ENCODE measurements at regions of chr16 and their contacts with region 1.

Region 1: DNA sequence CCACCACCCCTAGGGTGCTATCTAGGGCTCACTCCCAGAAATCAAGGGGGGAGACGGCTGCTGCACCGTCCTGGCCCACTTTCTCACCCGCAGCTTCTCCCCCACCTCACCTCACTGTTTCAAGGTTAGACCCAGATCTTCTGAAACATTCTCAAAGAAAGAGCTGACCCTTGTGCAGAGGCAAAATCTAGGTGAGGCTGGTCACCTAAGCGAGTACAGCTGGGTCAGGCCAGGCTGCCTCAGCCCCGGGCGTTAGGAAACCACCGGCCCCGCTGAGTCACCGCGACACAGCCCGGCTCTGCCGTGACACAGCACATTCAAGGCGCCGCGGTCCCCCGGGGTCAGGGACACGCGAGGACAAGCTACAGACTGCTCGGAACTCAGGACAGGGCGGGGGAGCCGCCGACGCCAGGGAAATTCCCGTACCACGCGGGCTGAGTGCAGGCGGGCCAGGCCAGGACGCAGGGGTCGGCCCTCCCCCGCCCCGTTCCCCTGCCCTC is 27.1 kb downstream of the GNPTG start:
- DNase-seq: peak; percentile 69
- H3K4me3 Mint-ChIP-seq: peak overlapping the region; percentile 75
- H3K27ac Mint-ChIP-seq: peak overlapping the region; percentile 77
- H3K4me1 Mint-ChIP-seq: peaks cover 20% of the 10 kb centered on the region
- H3K27me3 Mint-ChIP-seq: no peaks in the 10 kb centered on the region

Region 2: GRCh38 chr16:1363501-1364041 is 15.3 kb before region 1 on chr16:
- CTCF ChIA-PET with region 1: interaction called, 29 read pairs
- POLR2A ChIA-PET with region 1: interaction called, 11 read pairs
- DNase-seq: peak; percentile 77
- H3K4me3 Mint-ChIP-seq: no peak overlapping the region
- H3K27ac Mint-ChIP-seq: no peak overlapping the region
- H3K4me1 Mint-ChIP-seq: peaks cover 1% of the 10 kb centered on the region
- H3K27me3 Mint-ChIP-seq: no peaks in the 10 kb centered on the region

Region 3: DNA sequence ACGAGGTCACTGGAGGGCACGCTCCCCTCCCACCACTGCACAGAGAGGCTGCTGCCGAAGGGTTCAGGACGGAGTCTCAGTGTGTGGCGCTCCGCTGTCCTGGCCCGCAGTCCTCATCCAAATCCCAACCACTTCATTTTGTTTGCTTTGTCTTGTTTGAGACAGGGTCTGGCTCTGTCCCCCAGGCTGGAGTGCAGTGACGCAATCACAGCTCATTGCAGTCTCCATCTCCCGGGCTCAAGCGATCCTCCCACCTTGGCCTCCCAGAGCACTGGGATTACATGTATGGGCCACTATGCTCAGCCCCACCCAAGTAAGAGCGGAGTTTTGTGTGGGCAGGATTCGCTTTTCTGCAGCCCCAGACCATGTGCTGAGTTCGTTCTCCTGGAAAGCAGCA is 22.9 kb after region 1 on chr16:
- CTCF ChIA-PET with region 1: no interaction called
- POLR2A ChIA-PET with region 1: no interaction called
- DNase-seq: no peak
- H3K4me3 Mint-ChIP-seq: no peak overlapping the region
- H3K27ac Mint-ChIP-seq: no peak overlapping the region
- H3K4me1 Mint-ChIP-seq: no peaks in the 10 kb centered on the region
- H3K27me3 Mint-ChIP-seq: no peaks in the 10 kb centered on the region